Activated CD4-positive, alpha-beta T cell treated with anti-CD3 and anti-CD28 coated beads for 36 hours (primary cell): ENCODE measurements at regions of chr3 and their contacts with region 1.

Region 1: GRCh38 chr3:118884748-118885206 is 149.9 kb downstream of the IGSF11 start:
- DNase-seq: peak; percentile 89
- ATAC-seq: peak; percentile 89
- H3K4me3 Mint-ChIP-seq: no peak overlapping the region
- H3K27ac Mint-ChIP-seq: no peak overlapping the region
- H3K4me1 Mint-ChIP-seq: peaks cover 3% of the 10 kb centered on the region
- H3K27me3 Mint-ChIP-seq: peaks cover 17% of the 10 kb centered on the region

Region 2: DNA sequence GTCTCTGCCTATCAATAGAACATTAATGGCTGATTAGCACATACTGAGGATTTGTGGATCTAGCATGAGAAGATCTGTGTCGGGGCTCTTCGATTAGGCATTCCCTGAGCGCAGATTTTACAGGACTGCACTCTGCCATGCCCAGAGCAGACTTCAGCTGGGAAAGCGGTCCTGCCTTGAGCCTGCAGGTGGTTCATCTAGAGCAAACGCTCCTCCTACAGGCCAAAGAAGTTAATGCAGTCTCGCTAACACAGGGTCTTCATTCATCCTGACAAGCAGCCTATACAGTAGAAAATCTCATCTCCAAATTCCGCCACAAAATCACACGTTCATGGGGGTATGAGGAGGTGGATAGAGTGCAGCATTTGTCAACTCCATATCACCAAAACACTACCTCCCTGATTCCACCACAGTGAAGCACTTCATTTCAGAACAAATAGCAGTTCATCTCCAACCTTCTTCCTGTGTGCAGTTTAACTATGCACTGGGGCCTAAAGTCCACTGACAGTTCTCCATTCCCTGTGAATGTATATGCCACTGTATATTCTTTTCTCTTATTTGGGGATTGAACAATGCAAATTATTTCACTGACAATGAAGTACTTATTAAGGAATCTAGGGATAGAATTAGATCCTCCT is 256.0 kb before region 1 on chr3:
- CTCF ChIA-PET with region 1: no interaction called
- POLR2A ChIA-PET with region 1: no interaction called
- intact Hi-C with region 1: no loop called
- DNase-seq: peak; percentile 53
- ATAC-seq: peak; percentile 51
- H3K4me3 Mint-ChIP-seq: no peak overlapping the region
- H3K27ac Mint-ChIP-seq: no peak overlapping the region
- H3K4me1 Mint-ChIP-seq: no peaks in the 10 kb centered on the region
- H3K27me3 Mint-ChIP-seq: no peaks in the 10 kb centered on the region

Region 3: GRCh38 chr3:118661702-118662101 is 223.1 kb before region 1 on chr3:
- CTCF ChIA-PET with region 1: no interaction called
- POLR2A ChIA-PET with region 1: no interaction called
- intact Hi-C with region 1: no loop called
- DNase-seq: no peak
- ATAC-seq: no peak
- H3K4me3 Mint-ChIP-seq: no peak overlapping the region
- H3K27ac Mint-ChIP-seq: no peak overlapping the region
- H3K4me1 Mint-ChIP-seq: no peaks in the 10 kb centered on the region
- H3K27me3 Mint-ChIP-seq: peaks cover 3% of the 10 kb centered on the region

Region 4: DNA sequence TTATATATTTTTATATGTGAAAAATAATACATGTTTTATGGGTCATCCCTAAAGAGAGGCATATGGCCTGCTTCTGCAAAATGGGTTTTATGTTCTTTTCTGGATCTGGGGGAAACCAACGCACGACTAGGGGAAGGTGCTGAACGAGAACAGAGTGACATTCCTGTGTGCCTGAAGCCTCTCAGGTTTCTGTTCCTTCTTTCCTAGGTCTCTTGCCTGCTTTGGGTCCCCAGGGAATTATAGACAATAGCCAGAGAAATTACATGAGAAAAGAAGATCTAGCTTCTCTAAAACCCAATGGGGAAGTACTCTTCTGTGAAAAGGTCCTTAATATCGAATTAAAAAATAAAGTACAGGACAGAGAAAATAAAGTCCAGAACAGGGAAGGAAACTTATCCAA is 83.3 kb after region 1 on chr3:
- CTCF ChIA-PET with region 1: interaction called, 16 read pairs
- POLR2A ChIA-PET with region 1: no interaction called
- intact Hi-C with region 1: no loop called
- DNase-seq: no peak
- ATAC-seq: no peak
- H3K4me3 Mint-ChIP-seq: no peak overlapping the region
- H3K27ac Mint-ChIP-seq: no peak overlapping the region
- H3K4me1 Mint-ChIP-seq: no peaks in the 10 kb centered on the region
- H3K27me3 Mint-ChIP-seq: peaks cover 3% of the 10 kb centered on the region

Region 5: DNA sequence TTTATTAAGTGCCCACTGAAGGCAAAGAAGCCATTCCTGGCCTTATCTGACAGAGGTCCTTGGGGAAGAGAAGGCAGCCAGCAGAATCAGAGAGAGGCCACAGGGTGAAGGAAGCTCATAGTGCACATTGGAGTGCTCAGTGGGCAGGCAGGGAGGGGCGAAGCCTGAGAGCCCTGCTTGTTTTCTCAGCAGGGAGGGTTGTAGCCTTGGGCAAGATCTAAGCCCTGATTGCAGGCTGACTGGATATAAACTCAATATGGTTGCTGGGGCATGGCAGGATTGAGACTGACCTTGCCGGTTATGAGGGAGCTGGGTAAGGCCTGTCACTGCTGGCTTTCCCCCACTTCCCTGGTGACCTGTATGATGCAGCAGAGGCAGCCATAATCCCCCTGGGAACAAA is 157.4 kb after region 1 on chr3:
- CTCF ChIA-PET with region 1: interaction called, 240 read pairs
- POLR2A ChIA-PET with region 1: no interaction called
- intact Hi-C with region 1: no loop called
- DNase-seq: no peak
- ATAC-seq: no peak
- H3K4me3 Mint-ChIP-seq: no peak overlapping the region
- H3K27ac Mint-ChIP-seq: no peak overlapping the region
- H3K4me1 Mint-ChIP-seq: no peaks in the 10 kb centered on the region
- H3K27me3 Mint-ChIP-seq: peaks cover 20% of the 10 kb centered on the region

Region 6: DNA sequence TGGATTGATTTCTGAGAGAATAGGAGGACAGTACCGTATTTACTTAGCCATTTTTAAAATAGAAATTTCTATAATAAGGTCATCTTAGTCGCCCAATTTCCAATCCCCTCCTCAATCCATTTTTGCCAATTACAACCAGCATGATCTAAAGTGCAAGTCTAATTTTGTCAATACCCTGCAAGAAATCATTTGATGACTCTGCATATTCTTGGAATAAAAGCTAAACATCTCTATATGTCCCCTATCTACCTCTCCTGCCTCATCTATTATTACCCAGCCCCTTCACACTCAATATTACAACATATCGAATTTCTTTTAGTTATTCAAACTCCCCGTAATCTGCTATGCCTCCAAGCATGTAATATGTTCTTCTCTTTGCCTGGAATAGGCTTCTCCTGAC is 219.3 kb after region 1 on chr3:
- CTCF ChIA-PET with region 1: interaction called, 331 read pairs
- POLR2A ChIA-PET with region 1: no interaction called
- intact Hi-C with region 1: no loop called
- DNase-seq: no peak
- ATAC-seq: no peak
- H3K4me3 Mint-ChIP-seq: no peak overlapping the region
- H3K27ac Mint-ChIP-seq: no peak overlapping the region
- H3K4me1 Mint-ChIP-seq: no peaks in the 10 kb centered on the region
- H3K27me3 Mint-ChIP-seq: no peaks in the 10 kb centered on the region

Region 7: GRCh38 chr3:119559441-119559963 is 674.7 kb after region 1 on chr3 and contains the start of gene CD80:
- CTCF ChIA-PET with region 1: no interaction called
- POLR2A ChIA-PET with region 1: no interaction called
- intact Hi-C with region 1: loop called in 1 of 2 experiments (anchors 5 kb)
- DNase-seq: peak; percentile 81
- ATAC-seq: peak; percentile 88
- H3K4me3 Mint-ChIP-seq: no peak within 1 kb of the TSS
- H3K27ac Mint-ChIP-seq: peak within 1 kb of the TSS; percentile 15
- H3K4me1 Mint-ChIP-seq: peaks cover 13% of the 10 kb centered on the region
- H3K27me3 Mint-ChIP-seq: no peaks in the 10 kb centered on the region
- total RNA-seq, gene CD80: 0.74 to 1.2 TPM